CD4-positive, alpha-beta memory T cell (primary cell): ENCODE measurements at regions of chr15 and their contacts with region 1.

Region 1: GRCh38 chr15:38683382-38684242 is 119.0 kb upstream of the RASGRP1 start:
- DNase-seq: peak; percentile 68 to 76 (median 73)
- H3K4me3 ChIP-seq: no peak overlapping the region
- H3K4me3 Mint-ChIP-seq: peak overlapping the region in 7 of 8 donors; percentile 27 to 77 (median 55)
- H3K27ac ChIP-seq: peak overlapping the region; percentile 31
- H3K27ac Mint-ChIP-seq: peak overlapping the region; percentile 78 to 96 (median 94)
- H3K4me1 ChIP-seq: peaks cover 65% of the 10 kb centered on the region
- H3K4me1 Mint-ChIP-seq: peaks cover 61 to 73% (median 63%) of the 10 kb centered on the region in 4 donors
- H3K27me3 ChIP-seq: no peaks in the 10 kb centered on the region
- H3K27me3 Mint-ChIP-seq: no peaks in the 10 kb centered on the region

Region 2: GRCh38 chr15:38275959-38276358 is 407.7 kb before region 1 on chr15:
- CTCF ChIA-PET with region 1: no interaction called
- POLR2A ChIA-PET with region 1: no interaction called
- intact Hi-C with region 1: no loop called
- DNase-seq: no peak
- H3K4me3 ChIP-seq: no peak overlapping the region
- H3K4me3 Mint-ChIP-seq: no peak overlapping the region
- H3K27ac ChIP-seq: no peak overlapping the region
- H3K27ac Mint-ChIP-seq: no peak overlapping the region
- H3K4me1 ChIP-seq: no peaks in the 10 kb centered on the region
- H3K4me1 Mint-ChIP-seq: peaks cover 0 to 5% (median under 1%) of the 10 kb centered on the region in 4 donors
- H3K27me3 ChIP-seq: no peaks in the 10 kb centered on the region
- H3K27me3 Mint-ChIP-seq: peaks cover 10 to 16% of the 10 kb centered on the region in 2 donors

Region 3: DNA sequence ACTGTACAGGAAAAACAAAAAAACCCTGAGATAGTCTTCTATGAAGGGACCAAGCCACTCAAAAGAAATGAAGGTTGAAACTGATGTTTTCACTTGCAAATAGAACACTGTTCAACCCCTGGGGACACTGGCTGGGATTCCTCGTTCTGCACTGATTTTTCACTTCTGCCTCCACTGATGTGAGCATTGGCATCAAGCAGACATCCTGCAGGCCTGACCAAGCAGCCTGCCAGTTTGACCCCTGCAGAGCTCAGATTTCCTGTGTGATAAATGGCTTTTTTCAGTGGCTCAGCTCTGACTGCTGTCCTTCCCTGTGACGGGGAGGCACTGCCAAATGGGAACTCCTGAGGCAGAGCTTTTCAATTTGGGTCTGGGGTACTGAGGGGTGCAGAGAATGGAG is 169.0 kb before region 1 on chr15:
- CTCF ChIA-PET with region 1: interaction called, 55 read pairs
- POLR2A ChIA-PET with region 1: interaction called, 5 read pairs
- intact Hi-C with region 1: no loop called
- DNase-seq: no peak
- H3K4me3 ChIP-seq: no peak overlapping the region
- H3K4me3 Mint-ChIP-seq: no peak overlapping the region
- H3K27ac ChIP-seq: no peak overlapping the region
- H3K27ac Mint-ChIP-seq: peak overlapping the region; percentile 15 to 90 (median 72)
- H3K4me1 ChIP-seq: peaks cover 7% of the 10 kb centered on the region
- H3K4me1 Mint-ChIP-seq: peaks cover 12 to 24% (median 19%) of the 10 kb centered on the region in 4 donors
- H3K27me3 ChIP-seq: no peaks in the 10 kb centered on the region
- H3K27me3 Mint-ChIP-seq: no peaks in the 10 kb centered on the region

Region 4: DNA sequence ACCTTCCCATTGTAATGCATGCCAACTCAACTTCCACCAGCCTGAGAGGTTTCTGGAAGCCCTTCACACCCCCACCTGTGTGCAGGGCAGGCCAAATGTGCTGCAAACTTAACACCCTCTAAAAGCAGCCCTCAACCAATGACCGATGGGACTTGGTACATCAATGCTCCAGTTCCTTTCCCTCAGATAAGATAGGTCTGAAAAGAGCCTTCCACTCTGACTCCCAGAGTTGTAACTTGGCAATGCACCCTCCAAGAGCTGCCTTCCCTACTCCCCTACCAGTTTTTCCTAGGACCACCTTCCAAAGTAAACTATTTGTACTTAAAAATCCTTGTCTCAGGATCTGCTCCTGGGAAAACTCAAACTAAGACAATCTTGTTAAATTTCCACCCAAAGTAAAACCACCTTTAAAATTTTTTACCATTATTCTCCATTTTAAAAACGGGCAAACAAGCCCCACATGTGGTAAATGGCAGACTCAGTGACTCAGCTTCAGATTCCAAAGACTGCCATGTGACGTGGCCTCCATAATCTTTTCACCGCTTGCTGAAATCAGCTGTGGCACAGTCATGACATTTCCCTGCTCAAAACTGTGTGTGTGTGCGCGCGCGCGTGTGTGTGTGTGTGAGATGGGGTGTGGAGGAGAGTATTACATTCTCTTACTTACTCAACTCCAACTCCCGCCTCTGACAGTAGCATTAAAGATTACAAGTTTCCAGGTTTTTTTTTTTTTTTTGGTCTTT is 136.2 kb before region 1 on chr15:
- CTCF ChIA-PET with region 1: interaction called, 26 read pairs
- POLR2A ChIA-PET with region 1: interaction called, 74 read pairs
- intact Hi-C with region 1: no loop called
- DNase-seq: no peak
- H3K4me3 ChIP-seq: no peak overlapping the region
- H3K4me3 Mint-ChIP-seq: peak overlapping the region in 5 of 8 donors; percentile 15 to 63 (median 20)
- H3K27ac ChIP-seq: no peak overlapping the region
- H3K27ac Mint-ChIP-seq: peak overlapping the region; percentile 65 to 91 (median 80)
- H3K4me1 ChIP-seq: peaks cover 98% of the 10 kb centered on the region
- H3K4me1 Mint-ChIP-seq: peaks cover 65 to 90% (median 80%) of the 10 kb centered on the region in 4 donors
- H3K27me3 ChIP-seq: no peaks in the 10 kb centered on the region
- H3K27me3 Mint-ChIP-seq: no peaks in the 10 kb centered on the region

Region 5: DNA sequence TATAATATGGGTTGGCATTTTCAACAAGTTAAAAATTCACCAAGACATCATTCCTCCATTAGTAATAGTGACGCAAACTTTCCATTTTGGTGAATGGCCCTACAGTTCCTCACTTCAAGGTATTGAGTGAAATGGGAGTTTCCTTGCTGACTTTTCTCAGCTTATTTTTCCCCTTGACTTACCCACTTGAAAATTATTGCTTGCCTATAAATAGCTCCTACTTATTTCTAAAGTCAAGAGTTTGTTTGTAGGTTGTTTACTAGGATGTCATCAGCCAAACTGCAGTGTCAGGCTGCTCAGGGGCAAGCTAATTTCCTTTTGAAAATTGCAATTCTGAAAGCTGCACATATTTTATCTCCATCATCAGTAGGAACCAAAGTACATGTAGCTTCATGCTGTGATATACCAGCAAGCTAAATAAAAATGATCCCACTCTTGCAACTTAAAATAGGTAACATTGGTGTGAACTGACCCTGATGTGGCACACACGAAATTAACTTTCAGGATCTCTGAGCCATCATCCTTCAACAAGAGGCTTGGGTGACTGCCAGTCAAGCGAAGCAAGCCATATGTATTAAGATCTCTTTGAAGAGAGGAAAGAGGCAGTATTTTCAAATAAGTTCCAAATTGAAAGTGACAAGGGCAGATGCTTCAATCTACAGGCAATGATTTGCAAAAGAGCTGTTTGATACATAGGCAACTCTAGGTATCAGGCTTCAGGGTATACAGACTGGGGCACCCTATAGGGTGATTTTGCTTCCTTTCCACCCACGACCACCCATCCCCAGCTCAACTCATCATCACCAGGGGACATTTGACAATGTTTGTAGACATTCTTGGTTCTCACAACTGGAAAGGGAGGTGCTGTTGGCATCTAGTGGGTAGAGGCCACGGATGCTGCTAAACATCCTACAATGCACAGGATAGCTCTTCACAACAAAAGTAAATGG is 52.2 kb before region 1 on chr15:
- CTCF ChIA-PET with region 1: interaction called, 20 read pairs
- POLR2A ChIA-PET with region 1: interaction called, 5 read pairs
- intact Hi-C with region 1: no loop called
- DNase-seq: peak in 2 of 5 donors; percentile 15 to 26
- H3K4me3 ChIP-seq: no peak overlapping the region
- H3K4me3 Mint-ChIP-seq: peak overlapping the region in 7 of 8 donors; percentile 8 to 52 (median 26)
- H3K27ac ChIP-seq: no peak overlapping the region
- H3K27ac Mint-ChIP-seq: peak overlapping the region; percentile 49 to 88 (median 75)
- H3K4me1 ChIP-seq: peaks cover 25% of the 10 kb centered on the region
- H3K4me1 Mint-ChIP-seq: peaks cover 19 to 22% (median 20%) of the 10 kb centered on the region in 4 donors
- H3K27me3 ChIP-seq: no peaks in the 10 kb centered on the region
- H3K27me3 Mint-ChIP-seq: no peaks in the 10 kb centered on the region

Region 6: GRCh38 chr15:38660738-38661137 is 22.9 kb before region 1 on chr15:
- CTCF ChIA-PET with region 1: interaction called, 451 read pairs
- POLR2A ChIA-PET with region 1: interaction called, 520 read pairs
- intact Hi-C with region 1: no loop called
- DNase-seq: peak in 2 of 5 donors; percentile 32 to 64
- H3K4me3 ChIP-seq: no peak overlapping the region
- H3K4me3 Mint-ChIP-seq: peak overlapping the region in 6 of 8 donors; percentile 3 to 76 (median 62)
- H3K27ac ChIP-seq: no peak overlapping the region
- H3K27ac Mint-ChIP-seq: peak overlapping the region; percentile 23 to 90 (median 86)
- H3K4me1 ChIP-seq: peaks cover 62% of the 10 kb centered on the region
- H3K4me1 Mint-ChIP-seq: peaks cover 39 to 69% (median 53%) of the 10 kb centered on the region in 4 donors
- H3K27me3 ChIP-seq: no peaks in the 10 kb centered on the region
- H3K27me3 Mint-ChIP-seq: no peaks in the 10 kb centered on the region

Region 7: DNA sequence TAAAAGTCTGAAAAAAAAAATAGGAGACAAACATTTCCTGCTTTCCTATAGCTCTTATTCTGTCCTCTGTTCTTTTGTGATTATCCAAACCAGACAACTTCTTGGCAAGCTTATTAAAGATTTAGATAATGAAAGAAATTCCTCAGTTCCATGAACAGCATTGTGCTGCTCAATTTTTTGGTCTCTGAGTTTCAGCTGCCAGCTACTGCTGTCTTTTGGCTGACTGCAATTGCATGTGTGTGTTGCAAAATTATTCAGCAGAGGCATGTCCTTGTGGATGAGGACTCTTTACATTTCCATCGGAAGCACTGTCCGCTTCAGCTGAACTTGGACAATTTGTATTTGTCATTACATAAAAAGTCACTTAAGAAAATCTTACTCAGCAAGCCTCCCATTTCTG is 278.3 kb after region 1 on chr15:
- CTCF ChIA-PET with region 1: no interaction called
- POLR2A ChIA-PET with region 1: no interaction called
- intact Hi-C with region 1: no loop called
- DNase-seq: no peak
- H3K4me3 ChIP-seq: no peak overlapping the region
- H3K4me3 Mint-ChIP-seq: no peak overlapping the region
- H3K27ac ChIP-seq: no peak overlapping the region
- H3K27ac Mint-ChIP-seq: no peak overlapping the region
- H3K4me1 ChIP-seq: no peaks in the 10 kb centered on the region
- H3K4me1 Mint-ChIP-seq: no peaks in the 10 kb centered on the region
- H3K27me3 ChIP-seq: no peaks in the 10 kb centered on the region
- H3K27me3 Mint-ChIP-seq: peaks cover 0 to 4% of the 10 kb centered on the region in 2 donors